ENCODE measurements at regions of chr5 and their contacts with region 1.

Region 1: GRCh38 chr5:128566130-128566529 is 28.1 kb upstream of the FBN2 start:
- DNase-seq: peak; percentile 46 to 52
- H3K4me3 ChIP-seq: no peak overlapping the region
- H3K4me3 Mint-ChIP-seq: peak overlapping the region; percentile 35
- H3K27ac Mint-ChIP-seq: peak overlapping the region; percentile 91
- H3K4me1 ChIP-seq: peaks cover 23% of the 10 kb centered on the region
- H3K4me1 Mint-ChIP-seq: peaks cover 31% of the 10 kb centered on the region
- H3K27me3 ChIP-seq: no peaks in the 10 kb centered on the region
- H3K27me3 Mint-ChIP-seq: no peaks in the 10 kb centered on the region
- CTCF ChIP-seq: no peak

Region 2: DNA sequence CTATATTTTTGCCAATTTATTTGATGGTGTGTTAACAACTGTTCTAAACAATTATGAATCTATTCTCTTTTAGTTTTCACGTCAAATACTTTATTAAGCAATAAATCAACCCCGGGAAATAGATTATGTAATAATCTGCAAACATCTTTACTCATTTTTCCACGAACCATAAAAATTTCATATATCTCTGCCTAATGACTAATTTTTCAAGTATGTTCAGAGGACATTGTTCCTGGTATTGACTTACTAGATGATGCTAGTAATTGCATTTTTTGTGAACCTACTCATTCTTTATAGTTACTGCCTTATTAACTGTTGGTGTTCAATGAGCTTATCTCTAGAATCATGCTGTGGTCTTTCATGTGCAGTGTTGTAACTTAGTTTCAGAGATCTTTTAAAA is 13.0 kb after region 1 on chr5:
- CTCF ChIA-PET with region 1: no interaction called
- POLR2A ChIA-PET with region 1: no interaction called
- intact Hi-C with region 1: loop called (anchors 1 kb)
- DNase-seq: no peak
- H3K4me3 ChIP-seq: no peak overlapping the region
- H3K4me3 Mint-ChIP-seq: no peak overlapping the region
- H3K27ac Mint-ChIP-seq: peak overlapping the region; percentile 77
- H3K4me1 ChIP-seq: peaks cover 18% of the 10 kb centered on the region; the same call in 1 of the 2 replicates
- H3K4me1 Mint-ChIP-seq: peaks cover 16% of the 10 kb centered on the region
- H3K27me3 ChIP-seq: no peaks in the 10 kb centered on the region
- H3K27me3 Mint-ChIP-seq: no peaks in the 10 kb centered on the region
- CTCF ChIP-seq: no peak

Region 3: DNA sequence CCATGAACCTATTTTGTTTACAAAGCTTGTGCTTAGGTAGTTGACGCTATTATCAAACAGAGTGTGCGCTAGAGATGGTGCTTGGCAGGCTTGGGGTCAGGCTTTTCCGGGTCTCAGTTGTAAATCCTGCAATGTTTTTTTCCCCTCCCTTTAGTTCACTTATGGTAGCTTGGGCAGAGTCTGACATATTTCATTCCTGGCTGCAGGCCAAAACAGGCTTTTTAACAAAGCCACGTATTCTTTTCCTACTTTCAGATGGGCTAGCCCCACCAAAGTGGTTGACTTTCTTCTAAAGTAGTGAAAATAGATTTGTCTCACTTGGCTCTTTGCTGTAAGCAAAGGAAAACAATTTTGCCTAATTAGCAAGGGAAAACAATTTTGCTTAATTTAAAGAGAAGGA is 29.9 kb after region 1 on chr5:
- CTCF ChIA-PET with region 1: no interaction called
- POLR2A ChIA-PET with region 1: no interaction called
- intact Hi-C with region 1: loop called (anchors 2 kb)
- DNase-seq: no peak
- H3K4me3 ChIP-seq: no peak overlapping the region
- H3K4me3 Mint-ChIP-seq: no peak overlapping the region
- H3K27ac Mint-ChIP-seq: no peak overlapping the region
- H3K4me1 ChIP-seq: peaks cover 13% of the 10 kb centered on the region
- H3K4me1 Mint-ChIP-seq: peaks cover 6% of the 10 kb centered on the region
- H3K27me3 ChIP-seq: no peaks in the 10 kb centered on the region
- H3K27me3 Mint-ChIP-seq: no peaks in the 10 kb centered on the region
- CTCF ChIP-seq: no peak

Region 4: GRCh38 chr5:128825826-128826225 is 259.7 kb after region 1 on chr5:
- CTCF ChIA-PET with region 1: no interaction called
- POLR2A ChIA-PET with region 1: no interaction called
- intact Hi-C with region 1: loop called (anchors 2 kb)
- DNase-seq: no peak
- H3K4me3 ChIP-seq: no peak overlapping the region
- H3K4me3 Mint-ChIP-seq: no peak overlapping the region
- H3K27ac Mint-ChIP-seq: no peak overlapping the region
- H3K4me1 ChIP-seq: peaks cover 27% of the 10 kb centered on the region
- H3K4me1 Mint-ChIP-seq: peaks cover 7% of the 10 kb centered on the region
- H3K27me3 ChIP-seq: no peaks in the 10 kb centered on the region
- H3K27me3 Mint-ChIP-seq: no peaks in the 10 kb centered on the region
- CTCF ChIP-seq: no peak

Region 5: GRCh38 chr5:128844354-128844923 is 278.3 kb after region 1 on chr5:
- CTCF ChIA-PET with region 1: no interaction called
- POLR2A ChIA-PET with region 1: no interaction called
- intact Hi-C with region 1: no loop called
- DNase-seq: no peak
- H3K4me3 ChIP-seq: no peak overlapping the region
- H3K4me3 Mint-ChIP-seq: no peak overlapping the region
- H3K27ac Mint-ChIP-seq: no peak overlapping the region
- H3K4me1 ChIP-seq: no peaks in the 10 kb centered on the region
- H3K4me1 Mint-ChIP-seq: no peaks in the 10 kb centered on the region
- H3K27me3 ChIP-seq: no peaks in the 10 kb centered on the region
- H3K27me3 Mint-ChIP-seq: no peaks in the 10 kb centered on the region
- CTCF ChIP-seq: peak in 1 of 2 experiments; percentile 29

Measured in Caco-2 (cell line).